ENCODE measurements at regions of chr11 and their contacts with region 1.

Region 1: DNA sequence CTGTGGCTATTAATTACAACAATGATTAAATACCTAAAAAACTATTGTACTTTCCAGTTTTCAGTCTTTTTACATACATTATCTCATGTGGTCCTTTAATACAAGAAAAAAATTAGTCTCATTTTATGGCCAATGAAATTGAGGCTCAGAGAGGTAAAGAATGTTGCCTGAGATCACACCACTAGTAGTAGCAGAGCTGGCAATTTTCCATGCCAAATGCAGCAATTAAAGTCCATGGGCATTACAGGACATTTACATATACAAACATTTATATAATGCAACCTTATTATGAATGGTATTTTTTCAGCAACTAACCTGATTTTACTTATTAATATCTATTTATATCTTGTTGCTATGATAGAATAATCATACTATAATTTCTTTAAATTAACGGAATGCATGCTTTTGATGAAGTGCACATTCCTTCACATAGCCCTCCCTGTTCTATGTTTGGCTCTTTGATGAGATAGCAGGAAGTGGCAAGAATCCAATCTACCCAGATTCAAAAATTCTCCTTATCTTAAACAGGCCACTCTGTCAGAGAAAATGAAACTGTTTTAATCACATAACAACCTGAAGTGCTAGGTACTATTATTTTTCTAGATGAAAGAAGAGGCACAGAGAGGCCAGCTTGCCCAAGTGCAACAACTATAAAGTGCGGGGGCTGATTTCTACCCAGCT is 120.9 kb upstream of the LDLRAD3 start:
- DNase-seq: no peak
- H3K4me3 ChIP-seq: no peak overlapping the region
- H3K27ac ChIP-seq: no peak overlapping the region
- H3K4me1 ChIP-seq: peaks cover 3% of the 10 kb centered on the region
- H3K27me3 ChIP-seq: no peaks in the 10 kb centered on the region
- CTCF ChIP-seq: no peak

Region 2: GRCh38 chr11:35507688-35508087 is 315.3 kb before region 1 on chr11:
- CTCF ChIA-PET with region 1: no interaction called
- dilution Hi-C with region 1: no loop called
- in situ Hi-C with region 1: no loop called
- intact Hi-C with region 1: loop called (anchors 5 kb)
- DNase-seq: peak; percentile 53
- H3K4me3 ChIP-seq: no peak overlapping the region
- H3K27ac ChIP-seq: no peak overlapping the region
- H3K4me1 ChIP-seq: peaks cover 12% of the 10 kb centered on the region
- H3K27me3 ChIP-seq: no peaks in the 10 kb centered on the region
- CTCF ChIP-seq: peak; percentile 22 to 34

Region 3: DNA sequence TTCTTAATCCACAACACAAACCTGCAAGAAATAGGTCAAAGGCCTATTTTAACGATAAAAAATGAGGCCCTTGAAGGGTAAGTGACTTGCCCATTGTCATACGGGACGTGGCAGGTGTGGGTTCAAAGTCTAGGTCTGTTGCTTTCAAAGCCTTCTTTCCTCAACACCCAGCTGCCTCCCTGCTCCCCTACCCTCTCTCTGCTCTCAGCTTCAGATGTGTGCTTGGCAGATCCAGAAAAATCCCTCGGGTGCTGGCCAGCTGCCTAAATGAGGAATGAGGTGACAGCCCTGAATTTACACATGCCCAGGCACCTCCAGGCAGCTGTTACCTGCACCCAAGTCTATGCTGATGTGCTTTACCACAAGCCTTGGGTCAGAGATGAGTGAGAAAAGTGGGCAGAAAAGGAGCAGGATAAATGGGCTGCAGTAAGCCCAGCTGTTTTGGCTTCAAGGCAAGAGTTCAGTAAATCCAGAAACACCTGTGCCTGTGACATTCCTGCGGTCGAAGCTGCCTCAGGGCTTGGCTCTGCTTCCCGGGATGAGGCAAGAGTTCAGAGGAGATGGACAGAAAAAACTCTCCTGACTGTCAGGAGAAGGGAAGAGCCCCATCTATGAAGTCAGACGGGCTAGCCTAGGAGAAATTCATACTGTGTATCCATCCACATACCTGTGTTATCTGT is 71.0 kb after region 1 on chr11:
- CTCF ChIA-PET with region 1: interaction called, 13 read pairs
- dilution Hi-C with region 1: no loop called
- in situ Hi-C with region 1: no loop called
- intact Hi-C with region 1: no loop called
- DNase-seq: peak; percentile 98
- H3K4me3 ChIP-seq: no peak overlapping the region
- H3K27ac ChIP-seq: no peak overlapping the region
- H3K4me1 ChIP-seq: peaks cover 17% of the 10 kb centered on the region
- H3K27me3 ChIP-seq: no peaks in the 10 kb centered on the region
- CTCF ChIP-seq: no peak

Region 4: GRCh38 chr11:35907648-35908431 is 84.9 kb after region 1 on chr11:
- CTCF ChIA-PET with region 1: no interaction called
- dilution Hi-C with region 1: no loop called
- in situ Hi-C with region 1: no loop called
- intact Hi-C with region 1: no loop called
- DNase-seq: peak; percentile 83
- H3K4me3 ChIP-seq: no peak overlapping the region
- H3K27ac ChIP-seq: peak overlapping the region; percentile 72
- H3K4me1 ChIP-seq: peaks cover 32% of the 10 kb centered on the region
- H3K27me3 ChIP-seq: no peaks in the 10 kb centered on the region
- CTCF ChIP-seq: no peak

Region 5: DNA sequence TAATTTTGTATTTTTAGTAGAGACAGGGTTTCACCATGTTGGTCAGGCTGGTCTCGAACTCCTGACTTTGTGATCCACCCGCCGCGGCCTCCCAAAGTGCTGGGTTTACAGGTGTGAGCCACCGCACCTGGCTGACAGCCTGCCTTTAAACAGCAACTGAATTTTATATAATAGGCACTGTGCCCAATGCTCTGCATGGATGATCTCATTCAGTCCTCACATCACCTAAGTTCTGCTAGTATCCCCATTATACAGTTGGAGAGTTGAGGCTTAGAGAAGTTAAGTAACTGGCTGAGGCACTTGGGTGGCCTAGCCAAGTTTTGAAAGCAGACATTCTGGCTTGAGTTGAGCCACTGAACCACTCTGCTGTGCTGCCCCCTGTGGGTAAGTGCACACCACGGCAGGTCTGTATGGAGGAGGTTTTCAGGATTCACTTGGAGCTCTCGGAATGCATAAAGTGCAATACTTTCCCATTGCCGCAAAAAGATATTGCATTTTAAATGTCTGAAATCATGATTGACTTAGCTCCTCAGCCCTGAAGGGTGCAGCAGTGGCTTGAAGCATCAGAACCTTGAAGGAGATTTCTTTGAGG is 233.3 kb after region 1 on chr11:
- CTCF ChIA-PET with region 1: interaction called, 13 read pairs
- dilution Hi-C with region 1: no loop called
- in situ Hi-C with region 1: no loop called
- intact Hi-C with region 1: loop called (anchors 1 kb)
- DNase-seq: peak; percentile 24
- H3K4me3 ChIP-seq: no peak overlapping the region
- H3K27ac ChIP-seq: no peak overlapping the region
- H3K4me1 ChIP-seq: no peaks in the 10 kb centered on the region
- H3K27me3 ChIP-seq: no peaks in the 10 kb centered on the region
- CTCF ChIP-seq: peak; percentile 64 to 78

Region 6: DNA sequence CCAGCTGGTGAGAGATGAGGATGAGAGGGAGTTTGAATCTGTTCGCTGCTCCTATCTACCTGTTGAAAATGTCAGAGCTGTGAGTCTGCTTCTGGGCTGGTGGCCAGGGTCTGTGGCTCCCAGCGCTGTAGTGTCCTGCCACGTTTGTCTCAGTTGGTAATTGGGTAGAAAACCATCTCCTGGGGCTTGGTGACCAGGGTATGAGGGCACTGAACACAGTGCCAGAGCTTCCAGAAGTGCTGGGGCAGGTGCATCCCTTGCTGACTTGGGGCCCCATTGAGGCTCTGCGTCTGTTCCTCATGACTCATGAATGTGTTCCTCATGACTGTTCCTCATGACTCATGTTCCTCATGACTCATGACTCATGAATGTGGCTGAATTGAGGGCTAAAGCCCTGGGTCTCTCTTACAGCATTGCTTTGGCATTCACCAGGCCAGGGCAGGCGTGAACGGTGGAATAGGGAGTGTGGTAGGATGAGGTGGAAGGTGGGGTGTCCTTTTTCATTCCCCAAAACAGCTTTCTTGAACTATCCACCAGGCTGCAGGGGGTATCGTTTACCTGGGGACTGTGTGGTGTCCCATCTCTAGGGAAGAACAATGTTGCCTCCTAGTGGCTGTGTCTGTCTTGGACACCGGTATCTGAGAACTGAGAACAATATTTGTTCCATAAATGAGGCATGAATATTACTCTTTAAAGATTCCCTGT is 326.7 kb after region 1 on chr11:
- CTCF ChIA-PET with region 1: interaction called, 28 read pairs
- dilution Hi-C with region 1: no loop called
- in situ Hi-C with region 1: no loop called
- intact Hi-C with region 1: loop called (anchors 1 kb)
- DNase-seq: peak; percentile 100
- H3K4me3 ChIP-seq: no peak overlapping the region
- H3K27ac ChIP-seq: peak overlapping the region; percentile 67
- H3K4me1 ChIP-seq: peaks cover 43% of the 10 kb centered on the region
- H3K27me3 ChIP-seq: no peaks in the 10 kb centered on the region
- CTCF ChIP-seq: peak; percentile 63 to 76

Region 7: GRCh38 chr11:36354221-36355003 is 531.5 kb after region 1 on chr11:
- CTCF ChIA-PET with region 1: interaction called, 13 read pairs
- dilution Hi-C with region 1: no loop called
- in situ Hi-C with region 1: no loop called
- intact Hi-C with region 1: no loop called
- DNase-seq: peak; percentile 59
- H3K4me3 ChIP-seq: no peak overlapping the region
- H3K27ac ChIP-seq: no peak overlapping the region
- H3K4me1 ChIP-seq: peaks cover 15% of the 10 kb centered on the region
- H3K27me3 ChIP-seq: no peaks in the 10 kb centered on the region
- CTCF ChIP-seq: no peak

Measured in mammary epithelial cell (primary cell).